ENCODE measurements at regions of chr18 and their contacts with region 1.

Region 1: DNA sequence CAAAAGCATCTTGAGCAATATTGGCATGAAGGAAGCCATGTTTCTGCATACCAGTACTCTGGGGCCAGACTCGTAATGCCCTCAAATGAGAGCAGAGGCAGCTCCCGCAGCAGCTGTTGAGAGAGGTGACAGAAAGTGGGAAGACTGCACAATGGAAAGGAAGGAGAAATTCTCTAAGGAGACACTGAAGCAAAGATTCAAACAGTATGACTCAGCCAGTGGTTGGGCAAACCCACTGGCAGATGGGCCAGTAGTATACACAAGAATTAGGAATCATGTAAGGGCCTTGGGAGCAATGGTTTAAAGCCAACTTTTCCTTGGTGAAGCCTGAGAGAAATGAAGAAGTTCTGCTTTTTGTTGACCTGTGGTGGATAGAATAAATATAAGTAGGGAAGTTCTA is 2092.7 kb upstream of the PIK3C3 start:
- DNase-seq: no peak
- H3K4me3 ChIP-seq: no peak overlapping the region
- H3K27ac ChIP-seq: no peak overlapping the region
- H3K4me1 ChIP-seq: no peaks in the 10 kb centered on the region
- H3K27me3 ChIP-seq: no peaks in the 10 kb centered on the region
- CTCF ChIP-seq: no peak
- POLR2A ChIP-seq: no peak

Region 2: GRCh38 chr18:40179729-40180461 is 317.6 kb after region 1 on chr18:
- intact Hi-C with region 1: loop called (anchors 5 kb)
- DNase-seq: no peak
- H3K4me3 ChIP-seq: no peak overlapping the region
- H3K27ac ChIP-seq: no peak overlapping the region
- H3K4me1 ChIP-seq: no peaks in the 10 kb centered on the region
- H3K27me3 ChIP-seq: no peaks in the 10 kb centered on the region
- CTCF ChIP-seq: no peak
- POLR2A ChIP-seq: no peak

Region 3: DNA sequence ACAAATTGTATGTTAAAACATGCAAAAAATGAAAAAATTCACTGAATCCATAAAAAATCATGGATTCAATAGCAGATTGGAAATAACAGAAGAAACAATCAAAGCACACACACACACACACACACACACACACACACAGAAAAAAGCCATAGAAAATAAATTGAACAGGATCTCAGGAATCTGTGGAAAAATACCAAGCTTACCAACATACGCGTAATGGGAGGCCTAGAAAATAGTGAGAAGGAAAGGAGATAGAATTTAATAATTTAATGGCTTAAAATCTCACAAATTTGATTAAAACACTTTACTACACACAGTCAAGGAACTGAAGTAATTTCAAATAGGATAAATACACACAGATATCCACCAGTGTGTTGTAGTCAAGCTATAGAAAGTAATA is 421.2 kb after region 1 on chr18:
- intact Hi-C with region 1: no loop called
- DNase-seq: no peak
- H3K4me3 ChIP-seq: no peak overlapping the region
- H3K27ac ChIP-seq: no peak overlapping the region
- H3K4me1 ChIP-seq: no peaks in the 10 kb centered on the region
- H3K27me3 ChIP-seq: no peaks in the 10 kb centered on the region
- CTCF ChIP-seq: no peak
- POLR2A ChIP-seq: no peak

Measured in breast epithelium (tissue), 4 donors.